ENCODE measurements at regions of chr10 and their contacts with region 1.

Region 1: GRCh38 chr10:58268870-58269605 is at the start of gene CISD1:
- DNase-seq: peak; percentile 99
- ATAC-seq: peak; percentile 66
- H3K4me3 ChIP-seq: peak within 1 kb of the TSS; percentile 67 to 88 (median 76)
- H3K4me3 Mint-ChIP-seq: peak within 1 kb of the TSS; percentile 97
- H3K27ac ChIP-seq: peak within 1 kb of the TSS; percentile 89 to 98
- H3K27ac Mint-ChIP-seq: peak within 1 kb of the TSS; percentile 96
- H3K4me1 ChIP-seq: peaks cover 25 to 33% of the 10 kb centered on the region in 2 donors
- H3K4me1 Mint-ChIP-seq: peaks cover 36% of the 10 kb centered on the region
- H3K27me3 ChIP-seq: no peaks in the 10 kb centered on the region
- H3K27me3 Mint-ChIP-seq: no peaks in the 10 kb centered on the region
- CTCF ChIP-seq: no peak
- total RNA-seq, gene CISD1: 6.3 and 7.3 TPM in 2 replicates

Region 2: DNA sequence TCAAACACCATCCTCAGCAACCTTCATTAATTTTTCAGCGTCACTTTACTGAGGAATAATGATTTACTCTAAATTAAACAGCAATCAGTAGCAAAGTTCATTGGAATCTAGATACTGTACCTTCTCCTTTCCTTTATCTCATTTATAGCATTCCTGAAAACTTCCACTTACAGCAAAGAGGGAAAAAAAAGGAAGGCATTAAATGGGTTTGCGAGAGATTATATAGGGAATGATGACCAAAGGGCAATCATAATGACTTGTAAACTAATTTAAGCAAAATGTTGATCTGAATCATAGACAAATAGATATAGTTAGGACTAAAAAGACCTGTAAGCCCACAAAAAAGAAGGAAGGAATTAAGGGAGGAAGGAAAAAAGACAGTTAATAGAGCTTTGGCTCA is 43.4 kb before region 1 on chr10:
- CTCF ChIA-PET with region 1: no interaction called
- POLR2A ChIA-PET with region 1: no interaction called
- intact Hi-C with region 1: loop called (anchors 5 kb)
- DNase-seq: no peak
- ATAC-seq: no peak
- H3K4me3 ChIP-seq: no peak overlapping the region
- H3K4me3 Mint-ChIP-seq: no peak overlapping the region
- H3K27ac ChIP-seq: no peak overlapping the region
- H3K27ac Mint-ChIP-seq: no peak overlapping the region
- H3K4me1 ChIP-seq: no peaks in the 10 kb centered on the region
- H3K4me1 Mint-ChIP-seq: peaks cover 2% of the 10 kb centered on the region
- H3K27me3 ChIP-seq: no peaks in the 10 kb centered on the region
- H3K27me3 Mint-ChIP-seq: no peaks in the 10 kb centered on the region
- CTCF ChIP-seq: no peak

Region 3: GRCh38 chr10:58239561-58240169 is 29.4 kb before region 1 on chr10:
- CTCF ChIA-PET with region 1: no interaction called
- POLR2A ChIA-PET with region 1: no interaction called
- intact Hi-C with region 1: no loop called
- DNase-seq: no peak
- ATAC-seq: no peak
- H3K4me3 ChIP-seq: no peak overlapping the region
- H3K4me3 Mint-ChIP-seq: no peak overlapping the region
- H3K27ac ChIP-seq: no peak overlapping the region
- H3K27ac Mint-ChIP-seq: no peak overlapping the region
- H3K4me1 ChIP-seq: peaks cover 9 to 17% of the 10 kb centered on the region in 2 donors
- H3K4me1 Mint-ChIP-seq: peaks cover 51% of the 10 kb centered on the region
- H3K27me3 ChIP-seq: no peaks in the 10 kb centered on the region
- H3K27me3 Mint-ChIP-seq: no peaks in the 10 kb centered on the region
- CTCF ChIP-seq: no peak

Region 4: DNA sequence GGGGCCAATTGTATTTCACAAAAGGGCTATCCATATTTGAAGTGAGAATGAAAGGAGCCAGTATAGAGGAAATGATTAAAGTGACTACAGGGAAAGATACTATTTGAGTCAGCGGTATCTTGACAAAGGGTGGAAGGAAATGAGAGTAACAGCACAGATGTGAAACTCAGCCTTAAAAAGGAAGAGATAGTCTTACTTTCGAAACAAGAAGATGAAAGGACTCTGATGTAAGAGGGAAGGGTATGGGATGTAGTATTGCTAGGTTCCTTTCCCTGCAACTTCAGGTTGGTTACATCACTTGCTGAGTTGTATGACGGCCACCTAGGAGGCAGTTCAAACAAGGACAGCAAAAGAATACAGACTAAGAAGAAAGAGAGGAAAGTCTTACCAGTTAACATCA is 13.6 kb after region 1 on chr10:
- CTCF ChIA-PET with region 1: interaction called, 3 read pairs
- POLR2A ChIA-PET with region 1: no interaction called
- intact Hi-C with region 1: loop called (anchors 1 kb)
- DNase-seq: peak; percentile 66
- ATAC-seq: peak; percentile 85
- H3K4me3 ChIP-seq: peak overlapping the region in 1 of 5 experiments; percentile 15
- H3K4me3 Mint-ChIP-seq: peak overlapping the region; percentile 55
- H3K27ac ChIP-seq: peak overlapping the region in 1 of 2 donors; percentile 71
- H3K27ac Mint-ChIP-seq: peak overlapping the region; percentile 88
- H3K4me1 ChIP-seq: peaks cover 9 to 12% of the 10 kb centered on the region in 2 donors
- H3K4me1 Mint-ChIP-seq: peaks cover 17% of the 10 kb centered on the region
- H3K27me3 ChIP-seq: no peaks in the 10 kb centered on the region
- H3K27me3 Mint-ChIP-seq: no peaks in the 10 kb centered on the region
- CTCF ChIP-seq: no peak

Region 5: GRCh38 chr10:58334817-58335305 is 65.8 kb after region 1 on chr10 and contains the start of gene UBE2D1:
- CTCF ChIA-PET with region 1: no interaction called
- POLR2A ChIA-PET with region 1: interaction called, 3 read pairs
- intact Hi-C with region 1: loop called (anchors 1 kb)
- DNase-seq: peak; percentile 87
- ATAC-seq: peak; percentile 97
- H3K4me3 ChIP-seq: peak within 1 kb of the TSS; percentile 77 to 96 (median 93)
- H3K4me3 Mint-ChIP-seq: peak within 1 kb of the TSS; percentile 96
- H3K27ac ChIP-seq: peak within 1 kb of the TSS; percentile 13 to 87
- H3K27ac Mint-ChIP-seq: peak within 1 kb of the TSS; percentile 91
- H3K4me1 ChIP-seq: peaks cover 13% of the 10 kb centered on the region in 2 donors
- H3K4me1 Mint-ChIP-seq: peaks cover 31% of the 10 kb centered on the region
- H3K27me3 ChIP-seq: no peaks in the 10 kb centered on the region
- H3K27me3 Mint-ChIP-seq: no peaks in the 10 kb centered on the region
- CTCF ChIP-seq: no peak
- total RNA-seq, gene UBE2D1: 12.6 and 13.5 TPM in 2 replicates

Region 6: GRCh38 chr10:58384999-58385783 is 116.2 kb after region 1 on chr10 and contains the start of gene TFAM:
- CTCF ChIA-PET with region 1: interaction called, 9 read pairs
- POLR2A ChIA-PET with region 1: interaction called, 16 read pairs
- intact Hi-C with region 1: loop called (anchors 1 kb)
- DNase-seq: peak; percentile 97
- ATAC-seq: peak; percentile 84
- H3K4me3 ChIP-seq: peak within 1 kb of the TSS; percentile 73 to 89 (median 82)
- H3K4me3 Mint-ChIP-seq: peak within 1 kb of the TSS; percentile 92
- H3K27ac ChIP-seq: peak within 1 kb of the TSS; percentile 84 to 97
- H3K27ac Mint-ChIP-seq: peak within 1 kb of the TSS; percentile 96
- H3K4me1 ChIP-seq: peaks cover 24 to 29% of the 10 kb centered on the region in 2 donors
- H3K4me1 Mint-ChIP-seq: peaks cover 43% of the 10 kb centered on the region
- H3K27me3 ChIP-seq: no peaks in the 10 kb centered on the region
- H3K27me3 Mint-ChIP-seq: no peaks in the 10 kb centered on the region
- CTCF ChIP-seq: peak; percentile 47
- total RNA-seq, gene TFAM: 38.4 and 40.6 TPM in 2 replicates